ENCODE measurements at regions of chr12 and their contacts with region 1.

Region 1: GRCh38 chr12:19186722-19187661 is 57.5 kb downstream of the PLEKHA5 start:
- DNase-seq: peak; percentile 66
- H3K4me3 Mint-ChIP-seq: no peak overlapping the region
- H3K27ac Mint-ChIP-seq: peak overlapping the region; percentile 39
- H3K4me1 Mint-ChIP-seq: peaks cover 31% of the 10 kb centered on the region
- H3K27me3 Mint-ChIP-seq: no peaks in the 10 kb centered on the region
- CTCF ChIP-seq: peak; percentile 43

Region 2: GRCh38 chr12:18250313-18250916 is 936.6 kb before region 1 on chr12:
- CTCF ChIA-PET with region 1: no interaction called
- POLR2A ChIA-PET with region 1: no interaction called
- intact Hi-C with region 1: loop called (anchors 2 kb)
- DNase-seq: peak; percentile 73
- H3K4me3 Mint-ChIP-seq: no peak overlapping the region
- H3K27ac Mint-ChIP-seq: no peak overlapping the region
- H3K4me1 Mint-ChIP-seq: no peaks in the 10 kb centered on the region
- H3K27me3 Mint-ChIP-seq: no peaks in the 10 kb centered on the region
- CTCF ChIP-seq: peak; percentile 56

Region 3: GRCh38 chr12:18861287-18861858 is 325.6 kb before region 1 on chr12:
- CTCF ChIA-PET with region 1: interaction called, 35 read pairs
- POLR2A ChIA-PET with region 1: interaction called, 4 read pairs
- intact Hi-C with region 1: loop called (anchors 1 kb)
- DNase-seq: peak; percentile 64
- H3K4me3 Mint-ChIP-seq: no peak overlapping the region
- H3K27ac Mint-ChIP-seq: no peak overlapping the region
- H3K4me1 Mint-ChIP-seq: peaks cover 15% of the 10 kb centered on the region
- H3K27me3 Mint-ChIP-seq: no peaks in the 10 kb centered on the region
- CTCF ChIP-seq: peak; percentile 78

Region 4: DNA sequence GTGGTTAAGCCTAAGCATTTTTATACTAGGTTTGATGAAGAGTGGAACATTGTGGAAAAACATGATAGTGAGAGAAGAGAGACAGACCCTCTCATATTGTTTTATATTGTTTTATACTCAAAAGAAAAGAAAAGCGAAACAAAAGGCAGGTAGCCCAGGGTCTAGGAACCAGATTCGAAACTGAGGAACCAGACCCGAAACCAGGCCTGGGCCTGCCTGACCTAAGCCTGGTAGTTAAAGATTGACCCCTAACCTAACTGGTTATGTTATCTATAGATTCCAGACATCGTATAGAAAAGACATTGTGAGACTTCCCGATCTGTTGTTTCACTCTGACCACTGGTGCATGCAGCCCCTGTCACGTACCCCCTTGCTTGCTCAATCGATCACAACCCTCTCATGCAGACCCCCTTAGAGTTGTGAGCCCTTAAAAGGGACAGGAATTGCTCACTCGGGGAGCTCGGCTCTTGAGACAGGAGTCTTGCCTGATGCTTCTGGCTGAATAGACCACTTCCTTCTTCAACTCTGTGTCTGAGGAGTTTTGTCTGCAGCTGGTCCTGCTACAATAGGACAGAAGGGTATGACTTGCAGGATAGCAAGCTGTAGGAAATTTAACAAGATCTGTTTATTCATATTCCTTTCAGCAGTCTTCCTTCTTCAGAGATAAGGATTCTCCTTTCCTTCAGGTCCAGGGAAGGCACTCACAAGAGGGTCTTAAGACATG is 204.6 kb before region 1 on chr12:
- CTCF ChIA-PET with region 1: no interaction called
- POLR2A ChIA-PET with region 1: no interaction called
- intact Hi-C with region 1: no loop called
- DNase-seq: no peak
- H3K4me3 Mint-ChIP-seq: no peak overlapping the region
- H3K27ac Mint-ChIP-seq: no peak overlapping the region
- H3K4me1 Mint-ChIP-seq: no peaks in the 10 kb centered on the region
- H3K27me3 Mint-ChIP-seq: no peaks in the 10 kb centered on the region
- CTCF ChIP-seq: no peak

Region 5: DNA sequence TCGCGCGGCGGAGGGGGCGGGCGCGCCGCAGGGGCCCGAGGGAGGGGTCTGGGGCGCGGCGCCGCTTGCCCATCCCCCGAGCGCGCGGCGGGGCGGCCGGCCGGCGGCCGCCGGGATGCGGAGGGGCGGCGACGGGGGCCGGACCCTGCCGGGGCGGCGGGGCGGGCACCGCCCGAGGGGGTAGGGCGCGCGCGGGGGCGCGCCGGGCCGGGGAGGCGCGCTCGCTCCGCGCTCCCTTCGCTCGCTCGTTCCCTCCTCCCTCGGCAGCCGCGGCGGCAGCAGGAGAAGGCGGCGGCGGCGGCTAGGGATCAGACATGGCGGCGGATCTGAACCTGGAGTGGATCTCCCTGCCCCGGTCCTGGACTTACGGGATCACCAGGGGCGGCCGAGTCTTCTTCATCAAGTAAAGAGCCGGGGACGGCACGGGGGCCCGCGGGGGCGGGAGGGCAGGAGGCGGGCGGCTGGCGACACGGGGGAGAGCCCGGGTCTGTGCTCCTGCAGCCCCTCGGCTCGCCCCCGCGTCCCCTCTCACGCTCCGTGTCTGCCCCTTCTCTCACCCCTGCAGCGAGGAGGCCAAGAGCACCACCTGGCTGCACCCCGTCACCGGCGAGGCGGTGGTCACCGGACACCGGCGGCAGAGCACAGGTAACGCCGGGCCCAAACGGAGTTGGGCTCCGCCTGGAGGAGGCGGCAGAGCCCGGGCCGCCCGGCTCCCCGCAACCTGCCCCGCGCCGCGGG is 57.3 kb before region 1 on chr12 and contains the start of gene PLEKHA5:
- CTCF ChIA-PET with region 1: interaction called, 5 read pairs
- POLR2A ChIA-PET with region 1: interaction called, 15 read pairs
- intact Hi-C with region 1: loop called (anchors 2 kb)
- DNase-seq: peak; percentile 61
- H3K4me3 Mint-ChIP-seq: peak within 1 kb of the TSS; percentile 88
- H3K27ac Mint-ChIP-seq: peak within 1 kb of the TSS; percentile 63
- H3K4me1 Mint-ChIP-seq: peaks cover 18% of the 10 kb centered on the region
- H3K27me3 Mint-ChIP-seq: no peaks in the 10 kb centered on the region
- CTCF ChIP-seq: no peak
- total RNA-seq, gene PLEKHA5: 25.2 and 27.4 TPM in 2 replicates

Region 6: GRCh38 chr12:19288603-19289244 is 101.7 kb after region 1 on chr12:
- CTCF ChIA-PET with region 1: interaction called, 4 read pairs
- POLR2A ChIA-PET with region 1: no interaction called
- intact Hi-C with region 1: loop called (anchors 1 kb)
- DNase-seq: peak; percentile 46
- H3K4me3 Mint-ChIP-seq: no peak overlapping the region
- H3K27ac Mint-ChIP-seq: no peak overlapping the region
- H3K4me1 Mint-ChIP-seq: no peaks in the 10 kb centered on the region
- H3K27me3 Mint-ChIP-seq: no peaks in the 10 kb centered on the region
- CTCF ChIP-seq: peak; percentile 46